Heart right ventricle (tissue), 16 donors: ENCODE measurements at regions of chr12 and their contacts with region 1.

Region 1: DNA sequence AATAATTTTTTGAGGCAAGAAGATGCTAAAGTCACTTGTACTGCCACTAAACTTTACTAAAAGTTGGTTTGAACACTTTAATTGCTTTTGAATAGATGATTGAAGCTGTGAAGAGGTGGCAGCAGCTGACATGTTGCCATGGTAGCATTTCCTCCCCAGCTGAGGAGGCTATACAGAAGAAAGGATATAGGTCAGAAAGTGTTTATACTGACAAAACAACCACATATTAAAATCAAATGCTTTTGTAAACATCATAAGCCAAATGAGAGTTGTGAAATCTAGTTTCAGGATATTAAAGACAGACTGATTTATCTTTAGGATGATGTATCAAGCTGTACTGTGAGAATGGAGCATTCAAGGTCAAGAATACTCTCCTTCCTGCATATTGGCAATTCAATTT is 41.7 kb downstream of the TSPAN19 start:
- DNase-seq: no peak
- ATAC-seq: no peak
- H3K4me3 ChIP-seq: no peak overlapping the region
- H3K27ac ChIP-seq: no peak overlapping the region
- H3K4me1 ChIP-seq: no peaks in the 10 kb centered on the region
- H3K27me3 ChIP-seq: no peaks in the 10 kb centered on the region
- CTCF ChIP-seq: no peak

Region 2: DNA sequence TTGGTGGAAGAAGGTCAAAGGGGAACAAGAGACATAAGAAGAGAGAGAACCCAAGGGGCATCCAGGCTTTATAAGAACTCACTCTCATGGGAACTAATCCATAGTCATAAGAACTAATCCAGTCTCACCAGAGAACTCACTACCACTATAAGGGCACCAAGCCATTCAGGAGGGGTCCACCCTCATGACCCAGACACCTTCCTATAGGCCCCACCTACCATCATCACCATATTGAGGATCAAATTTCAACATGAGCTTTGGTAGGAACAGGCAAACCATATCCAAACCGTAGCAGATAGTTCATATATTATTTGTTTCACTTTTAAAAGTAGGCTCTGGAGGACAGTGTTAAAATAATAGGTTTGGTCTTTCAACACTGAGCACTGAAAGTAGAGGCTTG is 1957.6 kb before region 1 on chr12:
- intact Hi-C with region 1: loop called in 1 of 10 experiments (anchors 5 kb)
- DNase-seq: no peak
- ATAC-seq: no peak
- H3K4me3 ChIP-seq: no peak overlapping the region
- H3K27ac ChIP-seq: no peak overlapping the region
- H3K4me1 ChIP-seq: no peaks in the 10 kb centered on the region
- H3K27me3 ChIP-seq: no peaks in the 10 kb centered on the region
- CTCF ChIP-seq: no peak

Region 3: GRCh38 chr12:84891106-84891838 is 103.2 kb before region 1 on chr12:
- intact Hi-C with region 1: loop called in 1 of 10 experiments (anchors 10 kb)
- DNase-seq: no peak
- ATAC-seq: no peak
- H3K4me3 ChIP-seq: no peak overlapping the region
- H3K27ac ChIP-seq: no peak overlapping the region
- H3K4me1 ChIP-seq: no peaks in the 10 kb centered on the region
- H3K27me3 ChIP-seq: peaks cover 0 to 7% (median 0%) of the 10 kb centered on the region in 7 donors
- CTCF ChIP-seq: no peak